Naive thymus-derived CD4-positive, alpha-beta T cell (primary cell): ENCODE measurements at regions of chr11 and their contacts with region 1.

Region 1: DNA sequence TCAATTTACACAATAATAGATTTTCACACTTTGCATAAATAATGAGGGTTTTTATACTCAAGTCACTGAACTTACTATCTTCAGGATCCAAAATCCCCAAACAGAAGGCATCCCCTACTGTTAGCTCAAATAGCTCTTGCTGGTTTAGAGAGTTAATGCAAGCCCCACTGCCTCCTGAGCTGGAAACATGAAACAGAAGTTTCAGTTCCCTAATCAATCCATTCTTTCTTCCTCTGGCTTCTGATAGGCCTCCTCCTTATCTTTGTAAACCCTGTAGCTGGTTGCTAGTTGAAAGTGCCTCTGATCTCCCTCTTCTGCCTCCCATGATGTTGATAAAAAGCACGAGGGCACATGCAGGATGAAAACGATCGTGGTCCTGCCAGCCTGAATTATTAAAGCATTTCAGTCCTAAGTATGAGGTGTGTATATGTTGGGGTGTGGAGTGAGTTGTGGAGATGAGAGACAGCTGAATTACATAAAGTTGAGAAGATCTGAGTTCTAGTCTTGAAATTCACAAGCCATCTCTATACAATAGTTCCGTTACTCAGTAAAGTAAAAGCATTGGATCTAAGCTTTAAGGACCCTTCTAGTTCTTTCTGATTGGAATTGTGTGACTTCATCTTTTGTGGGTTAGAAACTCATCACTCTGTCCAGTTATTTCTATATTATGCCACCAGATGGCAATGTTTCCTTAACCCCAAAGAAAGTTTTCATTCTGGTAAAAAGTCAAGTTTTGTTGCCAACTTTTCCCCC is 35.0 kb upstream of the EHF start:
- DNase-seq: peak in 6 of 9 donors; percentile 5 to 47 (median 40)
- ATAC-seq: peak; percentile 60
- H3K4me3 ChIP-seq: no peak overlapping the region
- H3K4me3 Mint-ChIP-seq: no peak overlapping the region
- H3K27ac ChIP-seq: no peak overlapping the region
- H3K27ac Mint-ChIP-seq: no peak overlapping the region
- H3K4me1 ChIP-seq: peaks cover 0 to 4% of the 10 kb centered on the region in 2 donors
- H3K4me1 Mint-ChIP-seq: peaks cover 0 to 5% (median 0%) of the 10 kb centered on the region in 7 donors
- H3K27me3 ChIP-seq: no peaks in the 10 kb centered on the region
- H3K27me3 Mint-ChIP-seq: peaks cover 0 to 33% (median 18%) of the 10 kb centered on the region in 5 donors

Region 2: DNA sequence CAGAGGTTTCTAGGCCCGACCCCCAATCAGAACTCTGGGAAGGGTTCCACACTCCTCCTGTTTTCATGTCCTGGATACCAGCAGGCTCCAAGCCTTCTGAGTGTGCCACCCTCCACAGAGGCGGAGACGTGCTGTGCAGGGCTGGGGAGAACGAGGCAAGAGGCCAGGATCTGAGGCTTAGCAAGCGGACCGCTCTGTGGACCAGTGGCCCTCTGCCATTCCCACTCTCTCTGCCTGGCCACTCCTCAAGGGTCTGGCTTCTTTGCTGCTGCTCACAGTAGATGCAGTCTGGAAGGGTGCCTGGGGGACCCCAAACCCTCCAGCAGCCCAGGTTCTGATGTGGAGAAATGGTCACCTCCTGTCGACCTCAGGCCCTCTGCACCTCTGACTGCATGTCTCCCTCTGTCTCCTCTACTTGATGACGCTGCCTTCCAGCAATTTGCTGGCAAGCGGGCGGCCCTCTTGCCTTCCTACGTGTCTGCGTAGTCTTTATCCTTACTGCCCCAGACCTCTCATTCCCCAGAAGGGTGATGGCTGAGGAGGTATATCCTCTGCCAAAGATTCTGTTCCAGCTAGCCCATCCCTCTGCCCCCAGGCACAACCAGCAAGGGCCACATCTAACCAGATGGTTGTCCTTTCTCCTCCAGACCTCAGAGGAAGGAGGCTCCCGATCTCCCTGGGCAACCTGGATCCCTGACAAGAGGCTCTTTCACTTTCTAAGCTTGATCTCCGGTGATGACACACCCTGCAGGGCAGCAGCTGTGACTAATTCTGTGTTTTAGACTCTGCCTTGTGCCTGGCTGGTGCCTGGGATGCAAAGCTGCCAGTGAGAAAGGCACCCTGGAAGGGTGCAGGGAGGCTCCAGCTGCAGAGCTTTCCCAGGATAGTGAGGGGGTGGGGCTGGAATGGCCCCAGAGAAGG is 393.2 kb before region 1 on chr11:
- CTCF ChIA-PET with region 1: no interaction called
- POLR2A ChIA-PET with region 1: no interaction called
- intact Hi-C with region 1: no loop called
- DNase-seq: no peak
- ATAC-seq: no peak
- H3K4me3 ChIP-seq: no peak overlapping the region
- H3K4me3 Mint-ChIP-seq: no peak overlapping the region
- H3K27ac ChIP-seq: no peak overlapping the region
- H3K27ac Mint-ChIP-seq: peak overlapping the region in 1 of 9 donors; percentile 35
- H3K4me1 ChIP-seq: no peaks in the 10 kb centered on the region
- H3K4me1 Mint-ChIP-seq: peaks cover 0 to 22% (median 3%) of the 10 kb centered on the region in 7 donors
- H3K27me3 ChIP-seq: no peaks in the 10 kb centered on the region
- H3K27me3 Mint-ChIP-seq: peaks cover 0 to 6% (median 0%) of the 10 kb centered on the region in 5 donors

Region 3: GRCh38 chr11:34613552-34614056 is 27.7 kb after region 1 on chr11:
- CTCF ChIA-PET with region 1: no interaction called
- POLR2A ChIA-PET with region 1: no interaction called
- intact Hi-C with region 1: no loop called
- DNase-seq: no peak
- ATAC-seq: peak; percentile 20
- H3K4me3 ChIP-seq: no peak overlapping the region
- H3K4me3 Mint-ChIP-seq: no peak overlapping the region
- H3K27ac ChIP-seq: no peak overlapping the region
- H3K27ac Mint-ChIP-seq: no peak overlapping the region
- H3K4me1 ChIP-seq: no peaks in the 10 kb centered on the region
- H3K4me1 Mint-ChIP-seq: peaks cover 0 to 4% (median 0%) of the 10 kb centered on the region in 7 donors
- H3K27me3 ChIP-seq: no peaks in the 10 kb centered on the region
- H3K27me3 Mint-ChIP-seq: peaks cover 0 to 16% (median 0%) of the 10 kb centered on the region in 5 donors

Region 4: DNA sequence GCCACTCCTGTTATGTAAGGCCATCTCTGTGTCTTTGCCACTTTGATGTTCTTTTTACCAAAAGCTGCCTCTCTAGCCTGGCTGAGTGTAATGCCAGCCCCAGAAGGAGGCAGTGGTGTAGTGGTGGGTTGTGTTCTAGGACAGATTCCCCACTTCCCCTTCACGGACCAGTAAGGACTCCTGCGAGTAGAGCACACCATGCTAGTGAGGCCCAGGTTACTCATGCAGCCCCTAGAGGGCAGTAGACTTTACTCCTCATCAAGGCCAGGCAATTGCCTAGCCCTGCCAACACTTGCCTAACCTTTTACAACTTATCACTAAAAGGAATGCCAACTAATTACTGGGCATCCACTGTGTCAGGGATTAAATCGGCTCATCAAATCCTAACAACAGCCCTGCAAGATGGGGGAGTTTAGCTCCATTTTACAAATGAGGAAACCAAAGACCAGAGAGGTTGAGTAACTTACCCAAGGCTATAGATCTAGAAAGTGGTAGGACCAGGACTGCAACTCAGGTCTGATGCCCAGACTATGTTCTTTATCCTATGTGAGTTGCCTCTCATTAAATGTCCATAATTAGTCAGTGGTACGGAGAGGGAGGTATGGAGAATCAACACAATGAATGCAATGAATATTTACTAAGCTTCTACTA is 254.9 kb after region 1 on chr11:
- CTCF ChIA-PET with region 1: no interaction called
- POLR2A ChIA-PET with region 1: no interaction called
- intact Hi-C with region 1: loop called in 1 of 2 experiments (anchors 2 kb)
- DNase-seq: peak in 5 of 9 donors; percentile 4 to 16 (median 8)
- ATAC-seq: peak; percentile 87
- H3K4me3 ChIP-seq: no peak overlapping the region
- H3K4me3 Mint-ChIP-seq: no peak overlapping the region
- H3K27ac ChIP-seq: no peak overlapping the region
- H3K27ac Mint-ChIP-seq: no peak overlapping the region
- H3K4me1 ChIP-seq: no peaks in the 10 kb centered on the region
- H3K4me1 Mint-ChIP-seq: no peaks in the 10 kb centered on the region
- H3K27me3 ChIP-seq: no peaks in the 10 kb centered on the region
- H3K27me3 Mint-ChIP-seq: peaks cover 12 to 33% (median 30%) of the 10 kb centered on the region in 5 donors

Region 5: DNA sequence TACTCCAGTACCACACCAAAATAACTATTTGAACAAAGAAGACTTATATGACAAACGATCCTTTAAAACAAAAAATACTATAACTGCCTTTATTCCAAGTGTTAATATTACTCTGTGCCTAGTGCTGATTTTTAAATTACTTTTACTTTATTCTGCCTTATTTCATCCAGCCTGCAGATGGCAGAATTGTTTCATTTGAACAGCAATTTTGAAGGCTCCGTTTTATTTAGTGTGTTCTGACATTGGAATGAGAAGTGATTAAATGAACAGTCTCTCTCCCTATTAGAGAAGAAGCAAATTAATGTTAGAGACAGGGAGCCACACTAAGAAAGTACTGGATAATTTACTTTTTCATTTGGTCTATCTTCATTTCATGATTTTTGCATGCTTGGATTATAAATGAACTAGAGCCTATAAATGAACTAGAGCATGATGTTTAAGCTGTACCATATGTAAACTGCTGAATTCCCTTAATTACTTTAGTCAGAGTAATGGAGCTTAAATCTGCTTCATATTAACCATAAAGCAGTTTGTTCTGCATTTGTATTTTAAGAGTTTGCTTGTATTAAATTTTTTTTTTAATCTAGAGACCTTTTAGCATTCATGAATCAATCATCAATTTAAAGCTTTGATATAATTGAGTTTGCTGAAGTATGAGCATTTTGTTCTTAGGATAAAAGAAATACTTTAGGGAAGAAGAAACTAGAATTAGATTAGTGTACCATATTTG is 340.4 kb after region 1 on chr11:
- CTCF ChIA-PET with region 1: interaction called, 4 read pairs
- POLR2A ChIA-PET with region 1: no interaction called
- intact Hi-C with region 1: loop called in 1 of 2 experiments (anchors 1 kb)
- DNase-seq: peak in 7 of 9 donors; percentile 18 to 61 (median 58)
- ATAC-seq: peak; percentile 80
- H3K4me3 ChIP-seq: no peak overlapping the region
- H3K4me3 Mint-ChIP-seq: no peak overlapping the region
- H3K27ac ChIP-seq: no peak overlapping the region
- H3K27ac Mint-ChIP-seq: peak overlapping the region in 1 of 9 donors; percentile 49
- H3K4me1 ChIP-seq: peaks cover 0 to 10% of the 10 kb centered on the region in 2 donors
- H3K4me1 Mint-ChIP-seq: peaks cover 10 to 54% (median 29%) of the 10 kb centered on the region in 7 donors
- H3K27me3 ChIP-seq: no peaks in the 10 kb centered on the region
- H3K27me3 Mint-ChIP-seq: no peaks in the 10 kb centered on the region

Region 6: GRCh38 chr11:35412285-35412684 is 826.4 kb after region 1 on chr11:
- CTCF ChIA-PET with region 1: no interaction called
- POLR2A ChIA-PET with region 1: no interaction called
- intact Hi-C with region 1: loop called in 1 of 2 experiments (anchors 1 kb)
- DNase-seq: no peak
- ATAC-seq: no peak
- H3K4me3 ChIP-seq: no peak overlapping the region
- H3K4me3 Mint-ChIP-seq: no peak overlapping the region
- H3K27ac ChIP-seq: no peak overlapping the region
- H3K27ac Mint-ChIP-seq: no peak overlapping the region
- H3K4me1 ChIP-seq: no peaks in the 10 kb centered on the region
- H3K4me1 Mint-ChIP-seq: peaks cover 0 to 2% (median 0%) of the 10 kb centered on the region in 7 donors
- H3K27me3 ChIP-seq: peaks cover 5% of the 10 kb centered on the region in 2 donors
- H3K27me3 Mint-ChIP-seq: peaks cover 35 to 76% (median 48%) of the 10 kb centered on the region in 5 donors